ENCODE measurements at regions of chr3 and their contacts with region 1.

Region 1: DNA sequence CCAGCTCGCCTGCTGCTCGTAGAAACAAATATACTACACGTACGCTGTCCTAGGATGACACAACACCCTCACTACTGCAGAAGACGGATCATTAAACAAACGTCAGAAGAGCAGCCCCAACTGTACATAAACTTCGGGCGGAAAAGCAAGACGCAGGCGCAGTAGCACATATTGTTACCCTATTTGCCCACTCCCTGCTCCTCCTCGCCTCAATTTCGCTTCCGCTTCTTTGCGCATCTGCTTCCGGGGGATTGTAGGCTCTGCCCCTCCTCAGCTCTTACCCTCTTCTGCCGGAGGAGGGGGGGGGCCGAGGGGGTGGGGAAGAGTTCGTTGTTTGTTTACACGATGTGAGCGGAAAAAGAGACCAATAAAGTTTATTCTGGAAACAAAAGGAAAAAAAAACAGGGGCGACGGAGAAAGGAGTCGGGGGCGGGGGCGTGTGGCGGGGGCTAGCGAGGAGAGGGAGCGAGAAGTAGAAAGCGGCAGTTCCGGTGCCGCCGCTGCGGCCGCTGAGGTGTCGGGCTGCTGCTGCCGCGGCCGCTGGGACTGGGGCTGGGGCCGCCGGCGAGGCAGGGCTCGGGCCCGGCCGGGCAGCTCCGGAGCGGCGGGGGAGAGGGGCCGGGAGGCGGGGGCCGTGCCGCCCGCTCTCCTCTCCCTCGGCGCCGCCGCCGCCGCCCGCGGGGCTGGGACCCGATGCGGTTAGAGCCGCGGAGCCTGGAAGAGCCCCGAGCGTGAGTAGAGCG is at the start of gene PIK3CA:
- DNase-seq: peak; percentile 90
- CTCF ChIP-seq: no peak

Region 2: GRCh38 chr3:178982137-178982536 is 165.9 kb before region 1 on chr3:
- CTCF ChIA-PET with region 1: no interaction called
- POLR2A ChIA-PET with region 1: no interaction called
- DNase-seq: peak; percentile 34
- CTCF ChIP-seq: no peak

Region 3: DNA sequence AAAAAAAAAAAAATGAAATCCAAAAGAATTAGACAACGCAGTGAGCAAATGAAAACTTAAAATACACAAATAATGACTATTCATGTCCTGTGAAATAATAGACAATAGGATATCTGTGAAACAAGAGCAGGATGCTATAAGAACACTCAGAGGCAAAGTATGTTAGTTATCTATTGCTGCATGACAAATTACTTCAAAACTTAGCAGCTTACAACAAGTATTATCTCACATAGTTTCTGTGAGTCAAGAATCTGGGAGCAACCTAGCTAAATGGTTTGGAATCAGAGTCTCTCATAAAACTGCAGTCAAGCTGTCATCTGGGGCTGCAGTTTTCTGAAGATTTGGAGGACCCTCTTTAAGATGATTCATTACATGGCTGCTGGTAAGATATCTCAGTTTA is 40.0 kb before region 1 on chr3:
- CTCF ChIA-PET with region 1: interaction called, 10 read pairs
- POLR2A ChIA-PET with region 1: no interaction called
- DNase-seq: no peak
- CTCF ChIP-seq: no peak

Region 4: DNA sequence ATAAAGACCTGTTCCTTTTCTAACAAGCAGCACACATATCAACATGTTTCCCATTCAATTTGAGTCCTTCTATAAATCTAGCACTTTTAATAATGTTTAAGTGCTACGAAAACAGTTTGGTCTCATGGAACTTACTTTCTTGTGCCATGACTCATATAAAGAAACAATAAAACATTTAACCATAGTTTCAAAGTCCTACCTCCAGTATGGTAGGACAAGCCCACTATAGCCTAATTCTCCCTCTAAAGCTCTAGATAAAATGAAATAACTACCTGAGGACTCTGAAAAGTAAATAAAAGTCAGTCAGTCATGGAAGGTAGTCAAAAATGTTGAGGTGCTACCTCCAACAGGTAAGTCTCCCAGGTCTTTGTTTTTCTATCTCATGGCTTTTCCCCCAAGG is 11.8 kb before region 1 on chr3:
- CTCF ChIA-PET with region 1: interaction called, 13 read pairs
- POLR2A ChIA-PET with region 1: no interaction called
- DNase-seq: no peak
- CTCF ChIP-seq: no peak

Region 5: DNA sequence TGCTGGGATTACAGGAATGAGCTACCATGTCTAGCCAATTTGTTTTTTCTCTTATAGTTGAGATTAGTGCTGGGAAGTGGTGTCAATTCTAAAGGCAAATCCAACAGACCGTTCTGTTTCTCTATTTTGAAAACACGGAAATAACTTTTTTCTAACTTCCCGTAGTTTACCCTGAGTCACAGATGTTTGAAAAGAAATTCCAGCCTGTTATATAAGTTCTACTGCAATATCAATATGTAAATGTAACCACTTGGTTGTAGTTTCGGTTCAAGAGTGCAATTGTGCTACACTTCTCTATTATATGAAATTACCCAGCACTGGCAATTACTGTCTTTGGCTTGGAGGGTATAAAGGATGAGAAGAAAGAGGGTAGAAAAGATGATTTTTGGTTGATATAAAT is 325.5 kb after region 1 on chr3:
- CTCF ChIA-PET with region 1: no interaction called
- POLR2A ChIA-PET with region 1: no interaction called
- DNase-seq: no peak
- CTCF ChIP-seq: no peak

Region 6: DNA sequence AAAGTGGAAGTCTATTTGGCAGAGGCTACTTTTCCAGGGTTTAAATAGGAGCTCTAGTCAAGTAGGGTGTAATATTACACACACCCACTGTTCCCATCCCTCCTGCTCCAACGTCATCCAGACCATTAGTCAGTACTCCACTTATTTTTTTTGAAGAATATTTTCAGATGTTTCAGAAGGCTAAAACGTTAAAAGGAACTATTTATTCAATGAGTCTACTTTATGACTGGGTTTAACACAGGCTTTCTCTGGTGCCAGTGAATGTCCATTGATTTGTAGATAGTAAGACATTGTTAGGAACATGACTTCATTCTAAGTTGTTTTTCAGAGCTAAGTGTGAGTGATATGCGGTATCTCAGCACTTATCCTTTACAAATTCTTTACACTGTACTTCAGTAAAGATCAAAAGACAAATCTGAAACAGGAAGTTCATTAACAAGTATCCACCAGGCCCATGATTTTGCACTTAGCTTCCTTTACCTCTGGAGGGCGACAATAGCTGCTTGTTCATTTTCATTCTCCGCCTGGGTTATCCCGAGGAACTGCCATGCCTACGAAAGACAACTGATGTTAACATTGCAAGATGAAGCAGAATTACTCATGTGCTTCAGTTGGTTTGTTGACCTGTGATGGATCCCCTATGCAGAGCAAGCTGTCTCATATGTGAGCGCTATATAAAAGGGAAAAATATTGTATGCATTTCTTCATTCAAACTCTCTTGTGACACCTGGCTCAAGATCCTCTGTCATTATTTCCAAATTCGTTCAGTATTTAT is 663.5 kb after region 1 on chr3:
- CTCF ChIA-PET with region 1: no interaction called
- POLR2A ChIA-PET with region 1: interaction called, 13 read pairs
- DNase-seq: peak; percentile 64
- CTCF ChIP-seq: peak; percentile 64

Measured in GM10248 (cell line).